ENCODE measurements at regions of chr9 and their contacts with region 1.

Region 1: DNA sequence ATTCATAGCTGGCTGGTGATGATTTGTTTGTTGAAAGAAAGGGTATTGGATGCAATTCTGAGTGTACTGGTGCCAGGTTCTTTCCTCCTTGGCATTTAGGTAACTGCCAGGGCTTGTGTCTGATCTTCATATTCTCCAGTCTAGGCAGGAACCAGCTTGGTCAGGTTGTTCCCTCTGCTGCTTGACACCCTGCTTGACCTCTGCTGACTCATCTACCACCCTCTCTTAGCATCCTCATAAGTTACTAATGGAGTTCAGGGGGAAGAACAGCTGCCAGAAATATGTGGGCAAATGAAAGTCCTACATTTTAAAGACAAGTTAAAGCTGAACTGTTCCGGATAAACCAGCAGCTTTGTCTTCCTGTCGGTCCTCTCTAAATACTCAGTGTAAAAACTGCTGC is 116.1 kb upstream of the TNC start:
- DNase-seq: peak; percentile 69 to 85
- H3K4me3 ChIP-seq: no peak overlapping the region
- H3K27ac ChIP-seq: 0 out of 2 replicates have a peak overlapping the region, but pooled peaks have one; percentile 24
- H3K4me1 ChIP-seq: peaks cover 18% of the 10 kb centered on the region
- H3K27me3 ChIP-seq: no peaks in the 10 kb centered on the region
- CTCF ChIP-seq: no peak

Region 2: DNA sequence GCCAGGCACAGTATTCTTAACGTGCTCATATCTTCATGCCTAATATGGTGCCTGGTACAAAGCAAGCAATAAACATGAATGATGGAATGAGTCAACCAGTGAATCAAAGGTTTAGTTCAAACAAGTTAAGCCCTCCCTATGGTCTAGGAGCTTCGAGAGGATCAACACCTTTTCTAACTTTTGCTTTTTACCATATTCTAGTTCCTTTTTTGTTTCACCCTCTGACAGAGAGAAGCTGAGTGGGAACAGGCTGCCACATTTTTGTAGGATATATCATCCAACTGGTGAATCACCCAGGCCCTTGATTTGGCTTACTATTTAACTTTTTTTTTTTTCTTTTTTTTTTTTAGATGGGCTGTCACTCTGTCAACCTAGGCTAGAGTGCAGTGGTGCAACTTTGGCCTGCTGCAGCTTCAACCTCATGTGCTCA is 76.8 kb before region 1 on chr9:
- CTCF ChIA-PET with region 1: no interaction called
- POLR2A ChIA-PET with region 1: no interaction called
- intact Hi-C with region 1: loop called (anchors 2 kb)
- DNase-seq: peak; percentile 41 to 84
- H3K4me3 ChIP-seq: no peak overlapping the region
- H3K27ac ChIP-seq: peak overlapping the region; percentile 43
- H3K4me1 ChIP-seq: peaks cover 15% of the 10 kb centered on the region
- H3K27me3 ChIP-seq: no peaks in the 10 kb centered on the region
- CTCF ChIP-seq: no peak

Region 3: GRCh38 chr9:115211413-115212124 is 22.5 kb before region 1 on chr9:
- CTCF ChIA-PET with region 1: no interaction called
- POLR2A ChIA-PET with region 1: interaction called, 11 read pairs
- intact Hi-C with region 1: no loop called
- DNase-seq: no peak
- H3K4me3 ChIP-seq: no peak overlapping the region
- H3K27ac ChIP-seq: no peak overlapping the region
- H3K4me1 ChIP-seq: peaks cover 17% of the 10 kb centered on the region
- H3K27me3 ChIP-seq: no peaks in the 10 kb centered on the region
- CTCF ChIP-seq: no peak